IMR-90 (cell line): ENCODE measurements at regions of chr3 and their contacts with region 1.

Region 1: GRCh38 chr3:69425261-69425660 is 39.4 kb upstream of the FRMD4B start:
- DNase-seq: peak; percentile 7
- ATAC-seq: peak; percentile 56; the same call in 1 of the 2 replicates
- H3K4me3 ChIP-seq: no peak overlapping the region
- H3K27ac ChIP-seq: no peak overlapping the region
- H3K4me1 ChIP-seq: no peaks in the 10 kb centered on the region
- H3K27me3 ChIP-seq: no peaks in the 10 kb centered on the region
- CTCF ChIP-seq: peak; percentile 27; the same call in 1 of the 2 replicates
- POLR2A ChIP-seq: no peak
- RAD21 ChIP-seq: 0 out of 2 replicates have a peak, but pooled peaks have one; percentile 26

Region 2: DNA sequence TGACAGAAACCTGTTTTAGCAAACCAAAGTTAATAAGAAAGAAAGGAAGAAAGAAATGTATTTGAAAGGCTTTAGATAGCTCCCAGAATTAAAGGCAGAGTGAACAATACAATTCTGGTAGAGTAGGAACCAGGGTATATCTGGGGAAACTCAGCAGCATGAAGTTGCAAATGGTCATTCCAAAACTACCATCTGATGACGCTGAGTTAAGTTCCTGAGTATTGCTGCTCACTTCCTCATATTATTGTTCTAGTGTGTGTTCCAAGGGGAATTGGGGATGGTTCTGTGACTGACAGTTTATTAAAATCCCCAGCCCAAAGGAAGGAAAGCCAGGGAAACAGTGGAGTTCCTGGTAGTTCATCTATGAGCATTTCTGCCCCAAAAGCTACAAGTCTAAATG is 48.9 kb after region 1 on chr3:
- CTCF ChIA-PET with region 1: no interaction called
- POLR2A ChIA-PET with region 1: no interaction called
- dilution Hi-C with region 1: no loop called
- in situ Hi-C with region 1: no loop called
- intact Hi-C with region 1: no loop called
- DNase-seq: no peak
- ATAC-seq: no peak
- H3K4me3 ChIP-seq: no peak overlapping the region
- H3K27ac ChIP-seq: no peak overlapping the region
- H3K4me1 ChIP-seq: no peaks in the 10 kb centered on the region
- H3K27me3 ChIP-seq: no peaks in the 10 kb centered on the region
- CTCF ChIP-seq: no peak
- POLR2A ChIP-seq: no peak
- RAD21 ChIP-seq: no peak

Region 3: GRCh38 chr3:69671082-69671952 is 246.1 kb after region 1 on chr3:
- CTCF ChIA-PET with region 1: no interaction called
- POLR2A ChIA-PET with region 1: no interaction called
- dilution Hi-C with region 1: no loop called
- in situ Hi-C with region 1: no loop called
- intact Hi-C with region 1: loop called (anchors 5 kb)
- DNase-seq: peak; percentile 42
- ATAC-seq: peak; percentile 75
- H3K4me3 ChIP-seq: no peak overlapping the region
- H3K27ac ChIP-seq: no peak overlapping the region
- H3K4me1 ChIP-seq: no peaks in the 10 kb centered on the region
- H3K27me3 ChIP-seq: peaks cover 2% of the 10 kb centered on the region; the same call in 1 of the 2 replicates
- CTCF ChIP-seq: peak; percentile 77
- POLR2A ChIP-seq: no peak
- RAD21 ChIP-seq: peak; percentile 77